Colonic mucosa (tissue), 4 donors: ENCODE measurements at regions of chr7 and their contacts with region 1.

Region 1: GRCh38 chr7:143305423-143306070 is 10.4 kb upstream of the CLCN1 start:
- DNase-seq: peak; percentile 90
- H3K4me3 ChIP-seq: no peak overlapping the region
- H3K27ac ChIP-seq: no peak overlapping the region
- H3K4me1 ChIP-seq: no peaks in the 10 kb centered on the region
- H3K27me3 ChIP-seq: no peaks in the 10 kb centered on the region
- CTCF ChIP-seq: peak; percentile 83

Region 2: GRCh38 chr7:143013893-143014292 is 291.7 kb before region 1 on chr7:
- intact Hi-C with region 1: loop called (anchors 10 kb)
- DNase-seq: no peak
- H3K4me3 ChIP-seq: no peak overlapping the region
- H3K27ac ChIP-seq: no peak overlapping the region
- H3K4me1 ChIP-seq: no peaks in the 10 kb centered on the region
- H3K27me3 ChIP-seq: no peaks in the 10 kb centered on the region
- CTCF ChIP-seq: no peak

Region 3: GRCh38 chr7:143229054-143229790 is 76.3 kb before region 1 on chr7:
- intact Hi-C with region 1: no loop called
- DNase-seq: no peak
- H3K4me3 ChIP-seq: no peak overlapping the region
- H3K27ac ChIP-seq: no peak overlapping the region
- H3K4me1 ChIP-seq: no peaks in the 10 kb centered on the region
- H3K27me3 ChIP-seq: no peaks in the 10 kb centered on the region
- CTCF ChIP-seq: no peak

Region 4: DNA sequence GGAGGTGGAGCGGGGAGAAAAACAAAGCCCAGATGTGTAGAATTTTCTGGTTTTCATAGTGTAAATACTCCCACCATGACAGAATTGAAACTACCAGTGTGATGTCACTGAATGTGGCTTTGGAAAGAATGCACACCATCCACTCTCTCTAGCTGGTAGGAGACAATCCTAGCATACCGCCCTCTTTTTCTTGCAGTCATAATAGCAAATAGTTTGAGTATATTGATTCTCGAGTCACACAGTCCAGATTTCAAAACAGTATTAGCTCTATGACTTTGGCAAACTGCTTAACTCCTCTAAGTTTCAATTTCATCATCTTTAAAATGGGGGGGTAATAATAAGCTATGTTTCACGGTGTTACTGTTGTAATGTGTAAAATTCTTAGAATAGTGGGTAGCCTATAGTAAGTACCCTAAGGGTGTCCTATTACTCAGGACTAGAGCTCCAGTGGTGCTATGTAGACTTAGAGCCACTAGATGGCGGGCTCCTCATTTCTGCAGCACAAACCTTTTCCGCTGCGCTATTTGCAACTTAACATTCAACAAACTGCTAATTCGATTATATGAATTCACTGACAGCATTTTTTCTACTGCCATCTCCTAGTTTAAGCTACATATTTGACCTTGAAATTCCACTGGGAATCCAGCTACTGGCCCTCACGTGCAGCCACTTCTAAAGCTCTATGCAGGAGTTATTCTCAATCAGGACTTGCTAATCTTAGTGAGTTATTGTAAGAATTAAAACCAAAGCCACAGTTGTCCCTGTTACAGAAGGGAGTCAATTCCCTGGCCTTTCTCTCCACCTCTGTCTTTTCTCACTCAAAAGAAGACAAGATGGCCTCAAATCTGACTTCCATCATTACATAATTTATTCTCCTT is 65.0 kb before region 1 on chr7:
- intact Hi-C with region 1: loop called (anchors 2 kb)
- DNase-seq: peak; percentile 78
- H3K4me3 ChIP-seq: no peak overlapping the region
- H3K27ac ChIP-seq: peak overlapping the region; percentile 1
- H3K4me1 ChIP-seq: peaks cover 10% of the 10 kb centered on the region
- H3K27me3 ChIP-seq: no peaks in the 10 kb centered on the region
- CTCF ChIP-seq: peak; percentile 92

Region 5: DNA sequence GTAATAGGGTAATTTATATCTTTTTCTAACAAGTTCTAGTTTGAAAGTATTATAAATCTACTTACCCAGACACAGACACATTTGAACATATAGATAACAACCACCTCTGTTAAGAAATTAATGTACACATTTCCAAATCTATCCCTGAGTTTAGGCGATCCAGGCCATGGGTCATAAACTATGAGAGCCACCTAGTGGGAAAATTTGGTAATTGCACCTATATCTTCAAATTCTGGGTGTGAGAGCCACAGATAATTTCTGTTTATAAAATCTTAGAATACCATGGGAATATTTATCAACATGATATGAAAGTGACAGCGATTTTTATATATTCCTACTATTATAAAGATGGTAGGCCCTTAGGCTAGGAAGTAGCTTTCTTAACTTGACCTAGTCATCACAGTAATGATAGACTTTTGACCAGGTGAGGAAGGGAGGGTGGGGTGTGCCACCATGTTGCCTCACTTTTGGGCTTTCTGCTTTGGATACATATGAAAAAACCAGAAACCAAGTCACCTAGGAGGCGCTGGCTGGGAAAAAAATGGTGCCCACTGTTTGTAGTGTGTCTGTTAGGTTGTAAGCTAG is 111.1 kb after region 1 on chr7:
- intact Hi-C with region 1: loop called (anchors 5 kb)
- DNase-seq: no peak
- H3K4me3 ChIP-seq: no peak overlapping the region
- H3K27ac ChIP-seq: no peak overlapping the region
- H3K4me1 ChIP-seq: no peaks in the 10 kb centered on the region
- H3K27me3 ChIP-seq: no peaks in the 10 kb centered on the region
- CTCF ChIP-seq: peak; percentile 64